ENCODE measurements at regions of chr16 and their contacts with region 1.

Region 1: DNA sequence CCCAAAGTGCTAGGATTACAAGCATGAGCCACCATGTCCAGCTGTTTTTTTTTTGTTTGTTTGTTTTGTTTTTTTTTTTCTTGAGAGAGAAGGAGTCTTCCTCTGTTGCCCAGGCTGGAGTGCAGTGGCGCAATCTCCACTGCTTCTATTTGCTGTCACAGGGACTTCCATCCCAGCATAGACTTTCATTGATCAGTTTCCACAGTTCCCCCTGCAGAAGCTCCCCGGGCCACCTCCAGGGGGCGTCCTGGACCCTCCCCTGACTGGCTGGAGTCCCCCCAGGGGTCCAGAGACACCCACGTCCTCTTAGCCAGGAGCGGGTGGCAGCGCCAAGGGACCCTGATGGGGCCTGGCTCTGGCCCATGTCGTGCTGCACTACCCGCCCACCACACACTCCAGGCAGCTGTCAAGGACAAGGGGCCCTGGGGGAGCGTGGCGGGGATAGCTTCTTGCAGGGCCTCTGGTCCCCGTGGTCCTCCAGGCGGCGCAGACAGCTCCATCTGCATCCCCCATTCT is 3.1 kb upstream of the NPW start:
- H3K4me3 ChIP-seq: no peak overlapping the region
- H3K27ac ChIP-seq: no peak overlapping the region
- H3K4me1 ChIP-seq: peaks cover 6% of the 10 kb centered on the region
- CTCF ChIP-seq: peak; percentile 52

Region 2: GRCh38 chr16:1929578-1930337 is 86.7 kb before region 1 on chr16:
- CTCF ChIA-PET with region 1: no interaction called
- POLR2A ChIA-PET with region 1: no interaction called
- H3K4me3 ChIP-seq: peak overlapping the region; percentile 44
- H3K27ac ChIP-seq: peak overlapping the region; percentile 16; the same call in 1 of the 2 replicates
- H3K4me1 ChIP-seq: no peaks in the 10 kb centered on the region
- CTCF ChIP-seq: peak; percentile 59; the same call in 1 of the 2 replicates

Region 3: DNA sequence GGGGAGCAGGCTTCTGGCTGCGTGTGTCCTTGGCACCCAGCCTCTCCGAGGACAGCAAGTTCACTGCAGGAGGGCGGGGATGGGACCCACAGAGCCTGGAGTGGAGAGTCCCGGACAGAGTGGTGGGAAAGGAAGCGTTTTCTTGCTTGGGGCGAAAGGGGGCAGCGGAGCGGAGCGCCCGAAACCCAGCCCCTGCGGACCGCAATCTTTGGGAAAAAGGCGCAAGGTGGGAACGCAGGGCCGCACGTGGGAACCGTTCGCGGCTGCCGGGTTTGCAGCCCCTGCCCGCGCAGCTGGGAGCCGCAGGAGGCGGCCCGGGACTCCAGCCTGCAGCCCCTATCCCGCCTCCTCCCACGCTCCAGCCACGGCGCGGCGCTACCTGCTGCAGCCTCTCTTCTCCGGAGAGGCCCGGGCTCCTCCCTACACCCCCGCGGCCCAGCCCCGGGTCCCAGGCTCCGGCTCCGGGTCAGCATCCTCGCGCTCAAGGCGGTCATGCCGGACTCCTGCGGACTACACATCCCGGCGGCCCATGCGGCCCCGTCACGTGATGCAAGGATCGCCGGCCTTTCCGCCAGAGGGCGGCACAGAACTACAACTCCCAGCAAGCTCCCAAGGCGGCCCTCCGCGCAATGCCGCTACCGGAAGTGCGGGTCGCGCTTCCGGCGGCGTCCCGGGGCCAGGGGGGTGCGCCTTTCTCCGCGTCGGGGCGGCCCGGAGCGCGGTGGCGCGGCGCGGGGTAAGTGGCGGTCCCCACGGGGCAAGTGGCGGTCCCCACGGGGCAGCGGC is 31.1 kb after region 1 on chr16 and contains the starts of genes NTHL1 and TSC2:
- CTCF ChIA-PET with region 1: interaction called, 11 read pairs
- POLR2A ChIA-PET with region 1: interaction called, 3 read pairs
- H3K4me3 ChIP-seq: peak within 1 kb of the TSS; percentile 82
- H3K27ac ChIP-seq: peak within 1 kb of the TSS; percentile 58; the same call in 1 of the 2 replicates
- H3K4me1 ChIP-seq: no peaks in the 10 kb centered on the region
- CTCF ChIP-seq: peak; percentile 90

Region 4: GRCh38 chr16:2364638-2365210 is 348.3 kb after region 1 on chr16:
- CTCF ChIA-PET with region 1: no interaction called
- POLR2A ChIA-PET with region 1: no interaction called
- H3K4me3 ChIP-seq: no peak overlapping the region
- H3K27ac ChIP-seq: no peak overlapping the region
- H3K4me1 ChIP-seq: peaks cover 3% of the 10 kb centered on the region; the same call in 1 of the 2 replicates
- CTCF ChIP-seq: no peak

Region 5: DNA sequence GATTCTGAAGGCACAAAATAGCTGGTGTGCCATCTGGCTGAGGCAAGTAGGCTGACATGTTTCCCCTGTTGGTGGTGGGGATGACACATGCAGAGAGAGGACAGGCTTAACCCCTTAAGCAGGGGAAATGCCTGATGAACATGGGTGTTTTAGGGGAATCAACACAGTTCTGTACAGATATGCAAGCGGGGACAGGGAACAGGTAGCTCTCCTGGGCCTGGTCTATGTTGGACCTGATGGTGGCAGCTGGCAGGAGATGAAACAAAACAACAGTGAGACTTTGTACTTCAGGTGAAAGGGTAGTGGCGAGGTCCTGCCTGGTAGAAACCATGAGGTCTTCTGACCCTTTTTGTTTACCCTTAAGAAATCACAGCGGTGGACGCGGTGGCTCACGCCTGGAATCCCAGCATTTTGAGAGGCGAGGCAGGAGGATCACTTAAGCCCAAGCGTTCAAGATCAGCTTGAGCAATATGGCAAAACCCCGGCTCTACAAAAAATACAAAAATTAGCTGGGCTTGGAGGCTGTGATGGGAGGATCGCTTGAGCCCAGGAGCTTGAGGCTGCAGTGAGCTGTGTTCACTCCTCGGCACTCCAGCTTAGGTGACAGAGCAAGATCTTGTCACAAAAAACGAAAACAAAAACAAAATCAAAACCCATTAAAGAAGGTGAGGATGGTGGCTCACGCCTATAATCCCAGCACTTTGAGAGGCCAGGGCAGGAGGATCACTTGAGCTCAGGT is 1182.0 kb after region 1 on chr16:
- CTCF ChIA-PET with region 1: no interaction called
- POLR2A ChIA-PET with region 1: no interaction called
- H3K4me3 ChIP-seq: no peak overlapping the region
- H3K27ac ChIP-seq: no peak overlapping the region
- H3K4me1 ChIP-seq: no peaks in the 10 kb centered on the region
- CTCF ChIP-seq: no peak; the same call in 1 of the 2 replicates